Activated CD8-positive, alpha-beta T cell treated with anti-CD3 and anti-CD28 coated beads, Interleukin-2, amount 10 ng/mL, durations not matched to agents 7 days and 5 days (primary cell): ENCODE measurements at regions of chr7 and their contacts with region 1.

Region 1: DNA sequence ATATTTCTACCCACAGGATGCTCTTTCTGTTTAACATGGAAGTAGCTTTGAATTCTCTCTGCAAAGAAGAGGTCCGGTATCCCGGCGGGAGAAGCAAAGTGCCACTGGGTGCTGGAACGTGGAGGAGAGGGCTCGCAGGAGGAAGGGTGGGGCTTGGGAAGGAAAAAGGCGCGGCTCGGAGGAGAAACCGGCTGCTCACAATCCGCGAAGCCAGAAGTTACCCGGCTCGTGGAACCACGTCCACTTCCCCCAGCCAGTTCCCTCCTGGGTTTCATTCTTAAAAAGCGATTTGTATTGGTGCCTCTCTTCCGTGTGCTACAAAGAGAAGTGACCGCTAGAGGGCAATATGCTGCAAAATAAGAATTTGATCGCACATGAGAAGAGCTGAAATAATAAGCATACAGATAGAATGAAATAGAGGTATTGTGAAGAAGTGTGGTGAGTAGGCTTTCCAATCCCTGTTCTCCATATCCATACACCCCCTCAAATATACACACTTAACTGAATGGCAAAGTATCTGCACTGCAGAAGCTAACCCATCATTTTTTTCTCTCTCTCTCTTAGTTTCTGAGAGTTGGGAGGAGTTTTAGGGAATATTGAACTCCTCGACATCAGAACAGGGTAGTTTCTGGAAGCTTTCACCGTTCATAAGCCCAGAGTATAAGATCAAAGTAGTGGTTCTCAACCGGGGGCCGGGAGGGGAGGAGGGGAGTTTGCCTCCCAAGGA is 31.1 kb downstream of the TRIL start:
- DNase-seq: peak; percentile 76
- ATAC-seq: peak; percentile 98
- H3K4me3 Mint-ChIP-seq: peak overlapping the region; percentile 76
- H3K27ac Mint-ChIP-seq: no peak overlapping the region
- H3K4me1 Mint-ChIP-seq: peaks cover 20% of the 10 kb centered on the region
- H3K27me3 Mint-ChIP-seq: peaks cover 17% of the 10 kb centered on the region

Region 2: GRCh38 chr7:28955718-28956619 is 28.9 kb after region 1 on chr7:
- CTCF ChIA-PET with region 1: interaction called, 22 read pairs
- POLR2A ChIA-PET with region 1: no interaction called
- DNase-seq: peak; percentile 33
- ATAC-seq: peak; percentile 43
- H3K4me3 Mint-ChIP-seq: no peak overlapping the region
- H3K27ac Mint-ChIP-seq: no peak overlapping the region
- H3K4me1 Mint-ChIP-seq: peaks cover 18% of the 10 kb centered on the region
- H3K27me3 Mint-ChIP-seq: peaks cover 73% of the 10 kb centered on the region

Region 3: DNA sequence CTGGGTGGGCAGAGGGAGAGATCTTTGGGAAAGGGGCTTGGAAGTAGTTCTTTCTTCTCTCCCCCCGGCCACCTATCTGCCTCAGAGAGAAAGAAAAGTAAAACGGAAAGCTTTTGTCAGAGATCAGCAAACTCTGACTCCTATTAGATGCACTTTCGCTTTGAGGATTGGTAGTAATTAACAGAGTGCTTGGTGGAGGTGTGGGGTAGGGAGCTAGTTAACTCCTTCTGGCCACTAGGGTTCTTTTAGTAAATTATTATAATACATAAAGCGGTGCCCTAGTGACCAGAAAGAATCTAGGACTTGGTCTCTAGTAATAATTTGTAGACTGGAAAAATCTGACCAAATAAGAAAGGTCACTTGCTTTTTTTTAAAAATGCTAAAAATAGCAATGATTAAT is 164.7 kb after region 1 on chr7:
- CTCF ChIA-PET with region 1: interaction called, 279 read pairs
- POLR2A ChIA-PET with region 1: no interaction called
- DNase-seq: no peak
- ATAC-seq: peak; percentile 73
- H3K4me3 Mint-ChIP-seq: peak overlapping the region; percentile 69
- H3K27ac Mint-ChIP-seq: peak overlapping the region; percentile 74
- H3K4me1 Mint-ChIP-seq: peaks cover 21% of the 10 kb centered on the region
- H3K27me3 Mint-ChIP-seq: peaks cover 4% of the 10 kb centered on the region

Region 4: DNA sequence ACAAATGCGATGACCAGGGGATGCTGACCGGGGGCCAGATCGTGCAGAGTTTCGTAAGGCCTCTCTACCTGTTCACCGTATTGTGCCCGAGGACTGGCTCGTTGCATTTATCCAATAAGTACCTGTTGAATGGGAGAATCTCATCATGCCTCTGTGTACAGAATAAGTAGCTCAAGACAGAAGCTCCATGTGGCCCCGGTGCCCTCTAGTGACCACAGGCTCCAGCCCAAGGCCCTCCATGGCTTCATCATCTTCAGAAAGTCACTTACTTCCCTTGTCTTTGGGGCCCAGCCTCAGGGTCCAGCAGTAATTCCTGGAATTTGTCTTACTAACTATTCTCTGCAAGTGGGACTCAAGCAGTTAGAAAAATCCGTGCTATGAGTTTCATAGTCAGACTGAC is 418.6 kb after region 1 on chr7:
- CTCF ChIA-PET with region 1: interaction called, 11 read pairs
- POLR2A ChIA-PET with region 1: no interaction called
- DNase-seq: peak; percentile 50
- ATAC-seq: peak; percentile 61
- H3K4me3 Mint-ChIP-seq: no peak overlapping the region
- H3K27ac Mint-ChIP-seq: no peak overlapping the region
- H3K4me1 Mint-ChIP-seq: no peaks in the 10 kb centered on the region
- H3K27me3 Mint-ChIP-seq: peaks cover 4% of the 10 kb centered on the region